Aorta (tissue), 5 donors: ENCODE measurements at regions of chr6 and their contacts with region 1.

Region 1: GRCh38 chr6:27146706-27147505 is 100.6 kb upstream of the PRSS16 start:
- DNase-seq: peak; percentile 87 to 90
- ATAC-seq: peak; percentile 96
- H3K4me3 ChIP-seq: peak overlapping the region; percentile 44 to 85
- H3K27ac ChIP-seq: peak overlapping the region in 1 of 2 donors; percentile 82
- H3K4me1 ChIP-seq: no peaks in the 10 kb centered on the region
- H3K27me3 ChIP-seq: no peaks in the 10 kb centered on the region

Region 2: GRCh38 chr6:26156076-26156849 is 990.6 kb before region 1 on chr6:
- intact Hi-C with region 1: loop called in 1 of 2 experiments (anchors 5 kb)
- DNase-seq: peak; percentile 93 to 96
- ATAC-seq: peak; percentile 94
- H3K4me3 ChIP-seq: peak overlapping the region; percentile 78 to 96
- H3K27ac ChIP-seq: peak overlapping the region; percentile 93 to 99
- H3K4me1 ChIP-seq: peaks cover 0 to 4% of the 10 kb centered on the region in 2 donors
- H3K27me3 ChIP-seq: peaks cover 0 to 4% of the 10 kb centered on the region in 2 donors

Region 3: DNA sequence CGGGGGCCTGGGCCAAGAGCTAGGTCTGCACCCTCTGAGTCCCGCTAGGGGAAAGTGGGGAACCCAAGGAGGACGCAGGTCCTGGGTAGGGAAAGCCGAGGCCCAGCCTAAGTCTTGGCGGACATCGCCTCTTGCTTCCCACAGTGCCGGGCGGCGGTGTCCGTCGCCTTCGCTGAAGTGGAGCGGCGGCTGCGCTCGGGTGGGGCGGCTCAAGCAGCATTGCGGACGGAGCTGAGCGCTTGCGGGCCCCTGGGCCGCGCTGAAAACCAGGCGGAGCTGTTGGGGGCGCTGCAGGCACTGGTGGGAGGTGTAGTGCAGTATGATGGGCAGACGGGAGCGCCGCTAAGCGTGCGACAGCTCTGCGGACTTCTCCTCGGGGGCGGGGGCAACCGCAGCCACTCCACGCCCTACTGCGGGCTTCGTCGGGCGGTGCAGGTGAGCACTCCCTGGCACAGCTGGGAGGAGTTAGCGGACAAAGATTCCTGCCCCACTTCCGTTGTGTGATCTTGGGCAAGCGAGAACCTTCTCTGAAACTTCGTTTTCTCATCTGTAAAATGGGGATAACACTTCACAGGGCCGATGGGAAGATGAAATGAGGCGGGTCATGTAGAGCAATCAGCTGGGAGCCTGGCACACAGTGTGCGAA is 104.8 kb after region 1 on chr6:
- intact Hi-C with region 1: no loop called
- DNase-seq: peak; percentile 59 to 79
- ATAC-seq: peak; percentile 54
- H3K4me3 ChIP-seq: peak overlapping the region; percentile 32 to 44
- H3K27ac ChIP-seq: no peak overlapping the region
- H3K4me1 ChIP-seq: no peaks in the 10 kb centered on the region
- H3K27me3 ChIP-seq: no peaks in the 10 kb centered on the region

Region 4: DNA sequence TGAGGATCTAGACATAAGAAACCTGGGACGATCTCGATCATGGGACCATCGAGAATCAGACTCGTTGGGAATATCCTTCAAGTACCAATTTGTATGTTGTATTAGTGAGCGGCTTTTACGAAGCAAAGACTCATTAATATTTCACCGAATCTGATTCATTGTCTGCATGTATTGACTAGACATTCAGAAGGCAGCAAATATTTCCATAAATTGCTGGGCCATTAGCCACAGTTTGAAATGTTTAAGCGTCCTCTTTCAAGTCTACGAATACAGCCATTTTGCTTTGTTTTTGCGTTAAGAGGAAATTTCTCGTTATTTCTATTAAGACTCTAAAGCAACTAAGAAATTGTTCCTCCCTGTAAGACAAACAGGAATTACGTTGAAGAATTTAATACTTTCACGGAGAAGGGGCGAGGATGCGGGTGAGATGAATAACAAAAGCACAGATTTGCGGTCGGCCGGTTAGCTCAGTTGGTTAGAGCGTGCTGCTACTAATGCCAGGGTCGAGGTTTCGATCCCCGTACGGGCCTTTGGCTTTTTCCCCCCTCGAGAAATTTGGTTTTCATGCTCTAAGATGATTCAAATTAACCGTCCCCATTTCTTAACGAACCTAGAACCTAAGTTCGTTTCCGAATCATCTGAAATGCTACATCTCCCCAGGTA is 146.7 kb after region 1 on chr6:
- intact Hi-C with region 1: no loop called
- DNase-seq: no peak
- ATAC-seq: no peak
- H3K4me3 ChIP-seq: no peak overlapping the region
- H3K27ac ChIP-seq: no peak overlapping the region
- H3K4me1 ChIP-seq: no peaks in the 10 kb centered on the region
- H3K27me3 ChIP-seq: peaks cover 0 to 2% of the 10 kb centered on the region in 2 donors